HepG2 (cell line): ENCODE measurements at regions of chr12 and their contacts with region 1.

Region 1: DNA sequence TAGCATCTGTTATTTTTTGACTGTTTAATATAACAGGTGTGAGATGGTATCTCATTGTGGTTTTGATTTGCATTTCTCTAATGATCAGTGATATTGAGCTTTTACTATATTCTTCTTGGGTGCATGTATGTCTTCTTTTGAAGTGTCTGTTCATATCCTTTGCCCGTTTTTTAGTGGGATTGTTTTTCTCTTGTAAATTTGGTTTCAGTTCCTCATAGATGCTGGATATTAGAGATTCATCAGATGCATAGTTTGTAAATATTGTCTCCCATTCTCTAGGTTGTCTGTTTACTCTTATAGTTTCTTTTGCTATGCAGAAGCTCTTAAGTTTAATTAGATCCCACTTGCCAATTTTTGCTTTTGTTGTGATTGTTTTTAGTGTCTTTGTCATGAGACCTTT is 48.9 kb upstream of the NEDD1 start:
- DNase-seq: no peak
- ATAC-seq: no peak
- H3K4me3 ChIP-seq: no peak overlapping the region
- H3K27ac ChIP-seq: no peak overlapping the region
- H3K4me1 ChIP-seq: no peaks in the 10 kb centered on the region
- H3K27me3 ChIP-seq: 0 out of 5 replicates have a peak, but pooled peaks cover 0 to 4% of the 10 kb centered on the region in 2 experiments
- CTCF ChIP-seq: no peak
- EP300 ChIP-seq: no peak
- POLR2A ChIP-seq: no peak
- RAD21 ChIP-seq: no peak

Region 2: DNA sequence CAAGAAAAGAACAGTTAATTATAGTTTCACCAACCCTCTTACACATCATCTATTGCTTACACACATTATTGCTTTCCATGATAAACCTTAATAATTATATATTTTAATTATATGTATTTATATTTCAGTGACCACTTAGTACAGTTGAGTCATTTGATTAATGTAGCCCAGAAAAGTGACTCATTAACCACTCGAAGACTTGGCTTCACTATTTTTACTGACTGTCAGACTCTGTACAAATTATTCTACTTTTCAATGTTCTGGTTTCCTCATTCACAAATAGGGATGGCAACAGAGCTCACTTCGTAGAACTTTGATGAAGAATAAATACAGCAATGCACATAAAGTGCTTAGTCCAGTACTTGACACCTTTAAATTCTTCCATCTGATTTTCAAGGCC is 270.5 kb before region 1 on chr12:
- CTCF ChIA-PET with region 1: no interaction called
- POLR2A ChIA-PET with region 1: no interaction called
- in situ Hi-C with region 1: no loop called
- intact Hi-C with region 1: loop called (anchors 5 kb)
- DNase-seq: no peak
- ATAC-seq: no peak
- H3K4me3 ChIP-seq: no peak overlapping the region
- H3K27ac ChIP-seq: no peak overlapping the region
- H3K4me1 ChIP-seq: no peaks in the 10 kb centered on the region
- H3K27me3 ChIP-seq: no peaks in the 10 kb centered on the region
- CTCF ChIP-seq: no peak
- EP300 ChIP-seq: no peak
- POLR2A ChIP-seq: no peak
- RAD21 ChIP-seq: no peak